PC-9 (cell line): ENCODE measurements at regions of chr7 and their contacts with region 1.

Region 1: GRCh38 chr7:30800785-30801252 is 29.6 kb downstream of the MINDY4 start:
- DNase-seq: peak; percentile 52 to 61
- H3K4me3 ChIP-seq: no peak overlapping the region
- H3K27ac ChIP-seq: no peak overlapping the region
- H3K4me1 ChIP-seq: peaks cover 56% of the 10 kb centered on the region
- H3K27me3 ChIP-seq: no peaks in the 10 kb centered on the region
- CTCF ChIP-seq: peak; percentile 91

Region 2: DNA sequence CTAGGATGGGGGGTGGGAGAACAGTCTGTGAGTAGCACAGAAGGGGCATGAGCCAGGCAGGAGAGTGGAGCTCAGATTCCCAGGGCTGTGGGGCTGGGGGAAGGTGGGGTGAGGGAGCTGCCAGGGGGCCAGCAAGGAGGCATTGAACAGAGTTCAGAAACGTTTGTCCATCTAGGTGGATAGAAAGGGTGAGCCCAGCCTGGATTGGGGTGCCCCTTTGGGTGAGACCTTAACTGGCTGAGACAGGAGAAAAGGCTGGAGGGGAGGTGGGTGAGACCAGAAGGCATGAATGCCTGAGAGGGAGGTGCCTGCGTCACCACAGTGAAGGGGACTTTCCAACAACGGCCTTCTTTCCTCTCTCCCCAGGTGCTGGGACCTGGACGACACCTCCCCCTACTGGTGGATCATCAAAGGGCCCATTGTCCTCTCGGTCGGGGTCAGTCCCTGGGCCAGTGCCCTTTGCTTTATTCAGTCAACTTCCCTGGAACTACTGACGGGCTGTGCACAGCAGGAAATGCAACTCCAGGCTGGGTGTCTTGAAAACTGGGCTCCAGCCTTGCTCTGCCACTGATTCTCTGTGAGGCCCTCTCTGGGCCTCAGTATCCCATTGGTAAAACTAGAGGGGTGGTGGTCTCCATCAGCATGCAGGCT is 173.9 kb after region 1 on chr7:
- CTCF ChIA-PET with region 1: no interaction called
- POLR2A ChIA-PET with region 1: no interaction called
- intact Hi-C with region 1: loop called (anchors 1 kb)
- DNase-seq: peak; percentile 52 to 74
- H3K4me3 ChIP-seq: no peak overlapping the region
- H3K27ac ChIP-seq: no peak overlapping the region
- H3K4me1 ChIP-seq: no peaks in the 10 kb centered on the region
- H3K27me3 ChIP-seq: peaks cover 40% of the 10 kb centered on the region
- CTCF ChIP-seq: peak; percentile 88

Region 3: GRCh38 chr7:31735991-31736982 is 935.5 kb after region 1 on chr7:
- CTCF ChIA-PET with region 1: no interaction called
- POLR2A ChIA-PET with region 1: no interaction called
- intact Hi-C with region 1: loop called (anchors 5 kb)
- DNase-seq: peak; percentile 42 to 51
- H3K4me3 ChIP-seq: no peak overlapping the region
- H3K27ac ChIP-seq: no peak overlapping the region
- H3K4me1 ChIP-seq: no peaks in the 10 kb centered on the region
- H3K27me3 ChIP-seq: peaks cover 44% of the 10 kb centered on the region
- CTCF ChIP-seq: peak; percentile 95